AG04450 (cell line): ENCODE measurements at regions of chr14 and their contacts with region 1.

Region 1: DNA sequence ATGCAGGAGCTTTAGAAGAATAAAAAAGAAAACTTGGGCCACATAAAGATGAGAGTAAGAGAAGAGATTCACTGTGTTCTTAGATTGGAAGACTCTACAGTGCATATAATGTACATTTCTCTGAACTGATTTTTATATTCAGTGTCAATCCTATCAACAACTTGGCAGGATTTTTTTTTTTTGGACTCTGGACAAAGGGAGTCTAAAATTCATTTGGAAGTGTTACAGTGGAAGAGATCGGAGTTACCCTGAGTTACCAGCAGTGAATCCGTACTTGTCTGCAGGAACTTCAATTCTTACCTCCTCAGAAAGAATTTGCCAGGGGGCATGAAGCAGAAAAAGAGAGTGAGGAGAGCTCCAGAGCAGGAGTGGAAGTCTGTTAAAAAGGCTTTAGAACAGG is 24.0 kb downstream of the SERPINA11 start:
- DNase-seq: no peak
- H3K4me3 ChIP-seq: no peak overlapping the region
- H3K27ac ChIP-seq: no peak overlapping the region
- H3K27me3 ChIP-seq: peaks cover 14% of the 10 kb centered on the region
- CTCF ChIP-seq: no peak

Region 2: GRCh38 chr14:94448071-94448808 is 19.6 kb after region 1 on chr14:
- CTCF ChIA-PET with region 1: interaction called, 10 read pairs
- POLR2A ChIA-PET with region 1: no interaction called
- DNase-seq: no peak
- H3K4me3 ChIP-seq: no peak overlapping the region
- H3K27ac ChIP-seq: no peak overlapping the region
- H3K27me3 ChIP-seq: peaks cover 6% of the 10 kb centered on the region
- CTCF ChIP-seq: no peak

Region 3: GRCh38 chr14:94474581-94475031 is 46.0 kb after region 1 on chr14:
- CTCF ChIA-PET with region 1: interaction called, 10 read pairs
- POLR2A ChIA-PET with region 1: no interaction called
- DNase-seq: no peak
- H3K4me3 ChIP-seq: no peak overlapping the region
- H3K27ac ChIP-seq: no peak overlapping the region
- H3K27me3 ChIP-seq: no peaks in the 10 kb centered on the region
- CTCF ChIP-seq: no peak

Region 4: DNA sequence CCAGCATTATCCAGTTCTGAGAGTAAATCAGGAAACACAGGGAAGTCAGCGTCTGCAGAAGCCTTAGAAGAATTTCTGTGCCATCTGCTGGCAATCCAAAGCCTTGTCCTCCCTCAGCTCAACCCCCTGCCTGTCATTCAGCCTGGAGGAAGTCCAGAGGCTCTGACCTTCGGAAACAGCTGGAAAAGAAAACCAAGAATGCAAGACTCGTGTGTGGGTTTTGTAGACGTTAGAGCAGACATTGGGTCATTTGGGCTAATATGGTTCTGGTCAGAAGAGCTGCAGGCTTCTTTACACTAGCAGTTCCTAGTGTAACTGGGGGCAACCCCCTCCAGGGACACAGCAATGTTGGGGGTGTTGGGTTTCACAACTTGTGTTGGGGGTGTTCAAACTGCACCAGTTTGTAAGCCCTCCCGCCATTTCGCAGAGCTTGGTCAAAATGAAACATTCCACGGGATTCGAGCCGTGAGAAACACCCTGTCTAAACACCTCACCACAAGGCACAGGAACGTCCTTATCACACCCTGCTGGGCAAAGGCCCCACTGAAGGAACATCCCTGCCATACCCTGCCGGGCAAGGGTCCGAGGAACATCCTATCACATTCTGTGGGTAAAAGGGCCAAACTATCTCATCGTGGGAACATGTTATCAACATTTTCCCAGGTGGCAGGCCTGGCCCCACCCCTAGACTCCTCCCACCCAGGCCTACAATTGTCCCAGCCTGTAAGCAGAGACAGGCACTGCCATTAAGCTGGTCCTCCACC is 111.6 kb after region 1 on chr14:
- CTCF ChIA-PET with region 1: interaction called, 13 read pairs
- POLR2A ChIA-PET with region 1: no interaction called
- DNase-seq: no peak
- H3K4me3 ChIP-seq: no peak overlapping the region
- H3K27ac ChIP-seq: no peak overlapping the region
- H3K27me3 ChIP-seq: peaks cover 2% of the 10 kb centered on the region
- CTCF ChIP-seq: no peak

Region 5: GRCh38 chr14:94571950-94572349 is 143.3 kb after region 1 on chr14:
- CTCF ChIA-PET with region 1: no interaction called
- POLR2A ChIA-PET with region 1: no interaction called
- DNase-seq: no peak
- H3K4me3 ChIP-seq: no peak overlapping the region
- H3K27ac ChIP-seq: no peak overlapping the region
- H3K27me3 ChIP-seq: peaks cover 3% of the 10 kb centered on the region
- CTCF ChIP-seq: no peak

Region 6: GRCh38 chr14:94681300-94682060 is 252.9 kb after region 1 on chr14:
- CTCF ChIA-PET with region 1: interaction called, 15 read pairs
- POLR2A ChIA-PET with region 1: no interaction called
- DNase-seq: no peak
- H3K4me3 ChIP-seq: no peak overlapping the region
- H3K27ac ChIP-seq: no peak overlapping the region
- H3K27me3 ChIP-seq: peaks cover 2% of the 10 kb centered on the region
- CTCF ChIP-seq: peak; percentile 65